Heart right ventricle (tissue), 16 donors: ENCODE measurements at regions of chr3 and their contacts with region 1.

Region 1: DNA sequence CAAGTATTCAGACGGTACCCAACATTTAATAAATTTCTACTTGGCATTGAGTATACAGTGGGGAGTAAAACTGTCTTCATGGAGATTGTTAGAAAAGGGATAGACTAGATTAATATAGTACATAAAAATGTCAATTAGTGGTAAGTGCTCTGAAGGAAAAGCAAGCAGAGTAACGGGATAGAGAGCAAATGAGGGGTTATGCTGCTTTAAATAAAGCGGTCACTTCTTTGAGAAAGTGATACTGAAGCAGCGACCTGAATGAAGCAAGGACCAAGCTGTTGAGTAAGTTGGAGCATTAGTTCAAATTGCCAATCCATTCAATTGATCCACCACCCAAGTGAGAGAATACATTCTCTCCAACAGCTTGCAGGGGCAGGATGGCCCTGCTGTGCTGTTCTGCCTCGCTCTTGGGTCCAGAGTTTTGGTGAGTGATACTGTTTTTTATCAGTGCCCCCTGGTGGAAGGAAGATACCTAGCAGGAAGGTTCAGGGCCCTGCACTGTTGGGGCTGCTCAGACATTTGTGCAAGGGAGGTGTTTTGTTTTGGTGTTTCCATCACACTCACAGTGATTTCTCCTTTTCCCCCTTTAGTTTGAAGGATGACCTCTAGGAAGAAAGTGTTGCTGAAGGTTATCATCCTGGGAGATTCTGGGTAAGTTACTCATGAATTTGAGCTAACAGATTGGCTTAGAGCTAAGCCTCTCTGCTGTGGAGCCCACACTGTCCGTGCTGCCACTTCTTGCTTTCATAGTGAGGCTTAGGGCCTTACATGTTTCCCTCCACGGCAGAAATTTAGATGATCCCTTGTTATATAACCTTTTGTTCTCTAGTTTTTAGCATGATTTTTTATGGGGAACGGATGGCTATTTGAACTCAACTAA is 69.0 kb downstream of the RAB7A start:
- DNase-seq: peak in 1 of 2 donors; percentile 77
- ATAC-seq: peak; percentile 78 to 96 (median 94)
- H3K4me3 ChIP-seq: no peak overlapping the region
- H3K27ac ChIP-seq: peak overlapping the region in 7 of 10 donors; percentile 25 to 75 (median 50)
- H3K4me1 ChIP-seq: peaks cover 4 to 69% (median 49%) of the 10 kb centered on the region in 9 donors
- H3K27me3 ChIP-seq: no peaks in the 10 kb centered on the region
- CTCF ChIP-seq: peak; percentile 58 to 86 (median 82)

Region 2: GRCh38 chr3:128617557-128618397 is 177.2 kb before region 1 on chr3:
- intact Hi-C with region 1: loop called in 3 of 10 experiments (anchors 5 kb)
- DNase-seq: peak; percentile 97 to 99
- ATAC-seq: peak; percentile 94 to 99 (median 98)
- H3K4me3 ChIP-seq: peak overlapping the region; percentile 63 to 95 (median 80)
- H3K27ac ChIP-seq: peak overlapping the region; percentile 41 to 90 (median 84)
- H3K4me1 ChIP-seq: peaks cover 10 to 33% (median 22%) of the 10 kb centered on the region in 9 donors
- H3K27me3 ChIP-seq: no peaks in the 10 kb centered on the region
- CTCF ChIP-seq: peak; percentile 87 to 99 (median 98)

Region 3: GRCh38 chr3:128680602-128681368 is 114.2 kb before region 1 on chr3:
- intact Hi-C with region 1: loop called (anchors 1 to 10 kb)
- DNase-seq: peak; percentile 100
- ATAC-seq: peak; percentile 99 to 100 (median 100)
- H3K4me3 ChIP-seq: peak overlapping the region; percentile 54 to 78 (median 66)
- H3K27ac ChIP-seq: peak overlapping the region; percentile 88 to 99 (median 95)
- H3K4me1 ChIP-seq: peaks cover 0 to 21% (median 8%) of the 10 kb centered on the region in 9 donors
- H3K27me3 ChIP-seq: no peaks in the 10 kb centered on the region
- CTCF ChIP-seq: peak; percentile 92 to 100 (median 97)

Region 4: DNA sequence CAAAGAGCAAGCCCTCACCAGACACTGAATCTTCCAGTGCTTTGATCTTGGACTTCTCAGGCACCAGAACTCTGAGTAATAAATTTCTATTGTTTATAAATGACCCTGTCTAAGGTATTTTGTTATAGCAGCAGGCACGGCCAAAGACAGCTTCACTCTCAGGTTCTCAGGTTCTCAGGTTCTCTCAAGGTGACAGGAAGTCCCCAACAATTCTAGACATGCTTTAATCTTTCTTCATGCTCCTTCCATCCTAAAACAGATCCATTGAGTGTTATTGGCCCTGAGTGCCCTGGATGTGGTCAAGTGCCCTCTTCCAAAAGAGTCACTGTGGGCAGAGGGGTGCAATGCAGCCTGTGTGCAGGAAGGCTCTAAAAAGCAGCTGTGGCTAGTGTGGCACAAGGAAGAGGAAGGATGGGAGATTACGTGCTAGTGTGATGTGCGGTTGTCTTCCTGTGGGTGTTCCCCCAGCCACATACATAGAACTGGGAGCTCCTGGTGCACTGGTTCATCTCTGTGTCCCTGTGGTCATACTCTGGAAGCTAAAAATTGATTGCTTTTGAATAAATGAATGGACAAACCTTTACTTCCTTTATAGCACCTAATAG is 80.0 kb before region 1 on chr3:
- intact Hi-C with region 1: no loop called
- DNase-seq: no peak
- ATAC-seq: peak in 5 of 8 donors; percentile 30 to 72 (median 67)
- H3K4me3 ChIP-seq: no peak overlapping the region
- H3K27ac ChIP-seq: peak overlapping the region in 1 of 10 donors; percentile 13
- H3K4me1 ChIP-seq: peaks cover 0 to 23% (median 0%) of the 10 kb centered on the region in 9 donors
- H3K27me3 ChIP-seq: no peaks in the 10 kb centered on the region
- CTCF ChIP-seq: no peak

Region 5: GRCh38 chr3:128736601-128737000 is 58.4 kb before region 1 on chr3:
- intact Hi-C with region 1: loop called in 1 of 10 experiments (anchors 5 kb)
- DNase-seq: no peak
- ATAC-seq: peak in 1 of 8 donors; percentile 40
- H3K4me3 ChIP-seq: no peak overlapping the region
- H3K27ac ChIP-seq: no peak overlapping the region
- H3K4me1 ChIP-seq: peaks cover 6 to 89% (median 69%) of the 10 kb centered on the region in 9 donors
- H3K27me3 ChIP-seq: no peaks in the 10 kb centered on the region
- CTCF ChIP-seq: no peak